ENCODE measurements at regions of chr10 and their contacts with region 1.

Region 1: GRCh38 chr10:97081621-97082235 is 104.0 kb downstream of the SLIT1 start:
- DNase-seq: peak; percentile 38
- H3K4me3 Mint-ChIP-seq: no peak overlapping the region
- H3K27ac Mint-ChIP-seq: no peak overlapping the region
- H3K4me1 Mint-ChIP-seq: no peaks in the 10 kb centered on the region
- H3K27me3 Mint-ChIP-seq: peaks cover 13% of the 10 kb centered on the region

Region 2: DNA sequence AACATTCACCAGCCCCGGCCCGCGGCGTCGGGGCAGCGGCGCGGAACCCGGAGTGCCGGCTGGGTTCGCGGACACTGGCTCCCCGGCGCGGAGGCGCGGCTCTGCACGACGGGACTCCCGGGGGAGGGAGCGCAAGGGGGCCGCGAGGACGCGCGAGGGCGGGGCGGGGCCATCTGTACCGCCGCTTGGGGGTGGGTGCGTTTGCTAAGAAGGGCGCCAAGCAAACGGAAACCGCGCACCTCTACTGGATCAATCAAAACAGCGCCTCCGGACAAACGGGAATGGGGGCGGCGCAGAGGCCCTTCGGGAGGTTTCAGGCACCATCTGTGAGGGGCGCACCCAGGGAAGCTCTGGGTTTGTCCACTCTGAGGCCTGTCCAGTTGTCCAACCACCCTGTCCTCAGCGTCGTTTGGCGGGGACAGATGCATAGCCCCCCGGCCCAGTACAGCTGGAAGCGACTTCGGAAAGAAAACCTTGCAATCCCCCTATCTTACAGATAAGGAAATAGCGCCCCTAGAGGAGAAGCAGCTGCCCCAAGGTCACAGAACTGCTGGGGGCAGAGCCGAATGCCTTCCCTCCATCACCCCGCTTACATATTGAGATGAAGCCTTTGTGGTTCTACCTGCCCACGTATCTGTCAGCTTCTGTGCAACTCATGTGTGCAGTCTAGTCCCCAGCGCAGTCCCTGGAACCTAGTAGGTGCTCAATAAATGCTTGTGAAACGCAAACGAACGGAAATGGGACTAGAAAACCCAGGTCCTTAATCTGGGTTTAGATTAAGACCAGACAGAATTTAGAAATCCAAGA is 114.7 kb after region 1 on chr10:
- intact Hi-C with region 1: loop called (anchors 1 kb)
- DNase-seq: peak; percentile 50
- H3K4me3 Mint-ChIP-seq: peak overlapping the region; percentile 75
- H3K27ac Mint-ChIP-seq: no peak overlapping the region
- H3K4me1 Mint-ChIP-seq: peaks cover 13% of the 10 kb centered on the region
- H3K27me3 Mint-ChIP-seq: peaks cover 62% of the 10 kb centered on the region

Region 3: DNA sequence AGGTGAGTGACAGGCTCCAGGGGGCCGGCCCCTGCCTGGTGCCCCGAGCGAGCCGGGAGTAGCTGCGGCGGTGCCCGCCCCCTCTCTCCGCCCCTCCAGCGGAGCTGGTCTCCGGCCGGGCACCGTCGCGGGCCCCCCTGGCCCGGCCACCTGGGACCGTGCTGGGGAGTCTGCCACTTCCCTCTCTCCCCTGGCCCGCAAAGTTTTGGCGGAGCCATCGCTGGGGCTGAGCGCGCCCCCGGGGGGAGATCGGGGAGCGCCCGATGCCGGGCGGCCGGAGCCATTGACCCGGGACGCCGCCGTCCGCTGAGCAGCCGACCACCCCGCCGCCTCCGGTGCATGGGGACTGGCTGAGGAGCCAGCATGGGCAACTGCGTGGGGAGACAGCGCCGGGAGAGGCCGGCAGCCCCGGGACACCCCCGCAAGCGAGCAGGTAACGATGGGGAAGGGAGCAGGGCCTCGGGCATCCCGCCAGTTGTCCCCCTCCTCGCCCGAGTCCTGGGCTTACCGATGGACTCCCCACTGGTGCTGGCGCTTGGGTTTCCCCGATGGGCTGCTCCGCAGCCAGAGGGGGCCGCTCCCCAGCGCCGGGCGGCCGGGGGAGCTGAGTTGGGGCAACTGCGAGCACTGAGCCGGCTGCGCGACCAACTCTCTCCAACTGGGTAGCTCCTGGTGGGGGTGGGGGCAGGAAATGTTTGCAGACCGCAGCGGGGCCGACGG is 417.3 kb after region 1 on chr10 and contains the start of gene UBTD1:
- intact Hi-C with region 1: no loop called
- DNase-seq: no peak
- H3K4me3 Mint-ChIP-seq: peak within 1 kb of the TSS; percentile 99
- H3K27ac Mint-ChIP-seq: peak within 1 kb of the TSS; percentile 99
- H3K4me1 Mint-ChIP-seq: peaks cover 45% of the 10 kb centered on the region
- H3K27me3 Mint-ChIP-seq: peaks cover 34% of the 10 kb centered on the region
- total RNA-seq, gene UBTD1: 1.7 and 1.8 TPM in 2 replicates

Measured in activated T-helper 1 cell treated with anti-CD3 and anti-CD28 coated beads, Interleukin-12 subunit alpha, Interleukin-12 subunit beta, Interleukin-2, Interleukin-4 antibody, amounts not matched to agents 30 ng/mL and 10 ng/mL and 1 ng/mL, durations not matched to agents 14 hours and 24 hours and 36 hours (primary cell).